Prostate gland (tissue), 2 donors: ENCODE measurements at regions of chr13 and their contacts with region 1.

Region 1: DNA sequence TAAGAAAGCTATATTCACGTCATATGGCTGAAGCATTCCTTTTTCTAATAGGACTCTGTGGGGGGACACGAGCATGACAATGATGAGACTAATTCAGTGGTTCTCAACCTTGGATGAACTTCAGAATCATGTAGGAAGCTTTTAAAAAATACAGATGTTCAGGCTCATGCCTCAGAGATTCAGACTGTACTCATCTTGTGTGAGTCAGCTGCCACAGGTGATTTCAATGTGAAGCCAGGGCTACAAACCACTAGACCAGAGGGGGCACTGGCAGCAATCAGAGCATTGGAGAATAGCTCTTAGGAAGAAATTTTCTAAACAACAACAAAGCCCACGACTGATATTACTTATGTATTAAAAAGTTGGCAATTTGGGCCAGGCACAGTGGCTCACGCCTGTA is 91.7 kb downstream of the SERP2 start:
- DNase-seq: no peak
- H3K4me3 ChIP-seq: no peak overlapping the region
- H3K27ac ChIP-seq: no peak overlapping the region
- H3K4me1 ChIP-seq: no peaks in the 10 kb centered on the region
- H3K27me3 ChIP-seq: no peaks in the 10 kb centered on the region
- CTCF ChIP-seq: no peak
- POLR2A ChIP-seq: no peak

Region 2: GRCh38 chr13:43905435-43906031 is 559.8 kb before region 1 on chr13:
- intact Hi-C with region 1: loop called (anchors 10 kb)
- DNase-seq: peak; percentile 53
- H3K4me3 ChIP-seq: no peak overlapping the region
- H3K27ac ChIP-seq: no peak overlapping the region
- H3K4me1 ChIP-seq: no peaks in the 10 kb centered on the region
- H3K27me3 ChIP-seq: no peaks in the 10 kb centered on the region
- CTCF ChIP-seq: peak in 3 of 4 experiments; percentile 73 to 90 (median 89)
- POLR2A ChIP-seq: no peak

Region 3: GRCh38 chr13:44174769-44175425 is 290.4 kb before region 1 on chr13:
- intact Hi-C with region 1: no loop called
- DNase-seq: no peak
- H3K4me3 ChIP-seq: no peak overlapping the region
- H3K27ac ChIP-seq: no peak overlapping the region
- H3K4me1 ChIP-seq: no peaks in the 10 kb centered on the region
- H3K27me3 ChIP-seq: no peaks in the 10 kb centered on the region
- CTCF ChIP-seq: no peak
- POLR2A ChIP-seq: no peak

Region 4: GRCh38 chr13:44243198-44243857 is 222.0 kb before region 1 on chr13:
- intact Hi-C with region 1: no loop called
- DNase-seq: no peak
- H3K4me3 ChIP-seq: no peak overlapping the region
- H3K27ac ChIP-seq: no peak overlapping the region
- H3K4me1 ChIP-seq: no peaks in the 10 kb centered on the region
- H3K27me3 ChIP-seq: no peaks in the 10 kb centered on the region
- CTCF ChIP-seq: peak in 1 of 4 experiments; percentile 17
- POLR2A ChIP-seq: no peak

Region 5: DNA sequence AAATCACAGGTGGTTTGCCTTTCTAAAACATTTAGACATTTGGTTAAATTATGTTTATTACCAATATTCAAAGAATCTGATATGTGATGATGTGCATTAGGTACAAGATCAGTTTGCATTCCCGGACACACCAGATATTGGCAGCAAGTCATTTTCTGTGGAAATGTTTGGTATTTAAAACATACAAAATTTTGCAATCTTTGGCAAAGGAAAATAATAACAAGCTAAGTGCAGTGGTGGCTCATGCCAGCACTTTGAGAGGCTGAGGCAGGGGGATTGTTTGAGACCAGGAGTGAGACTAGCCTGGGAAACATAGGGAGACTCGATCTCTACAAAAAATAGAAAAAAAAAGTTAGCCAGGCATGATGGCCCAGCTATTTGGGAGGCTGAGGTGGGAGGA is 140.0 kb after region 1 on chr13:
- intact Hi-C with region 1: no loop called
- DNase-seq: no peak
- H3K4me3 ChIP-seq: no peak overlapping the region
- H3K27ac ChIP-seq: no peak overlapping the region
- H3K4me1 ChIP-seq: no peaks in the 10 kb centered on the region
- H3K27me3 ChIP-seq: no peaks in the 10 kb centered on the region
- CTCF ChIP-seq: no peak
- POLR2A ChIP-seq: no peak